ENCODE measurements at regions of chrX and their contacts with region 1.

Region 1: GRCh38 chrX:107672955-107673378 is 44.7 kb downstream of the PRPS1 start:
- DNase-seq: peak; percentile 76
- H3K4me3 Mint-ChIP-seq: no peak overlapping the region
- H3K27ac Mint-ChIP-seq: peak overlapping the region; percentile 63
- H3K4me1 Mint-ChIP-seq: peaks cover 36% of the 10 kb centered on the region
- H3K27me3 Mint-ChIP-seq: no peaks in the 10 kb centered on the region
- CTCF ChIP-seq: peak; percentile 80

Region 2: GRCh38 chrX:107398115-107398514 is 274.9 kb before region 1 on chrX:
- CTCF ChIA-PET with region 1: no interaction called
- intact Hi-C with region 1: no loop called
- DNase-seq: no peak
- H3K4me3 Mint-ChIP-seq: no peak overlapping the region
- H3K27ac Mint-ChIP-seq: no peak overlapping the region
- H3K4me1 Mint-ChIP-seq: no peaks in the 10 kb centered on the region
- H3K27me3 Mint-ChIP-seq: peaks cover 23% of the 10 kb centered on the region
- CTCF ChIP-seq: no peak

Region 3: GRCh38 chrX:107710617-107711391 is 37.8 kb after region 1 on chrX:
- CTCF ChIA-PET with region 1: interaction called, 39 read pairs
- intact Hi-C with region 1: loop called (anchors 2 kb)
- DNase-seq: peak; percentile 63
- H3K4me3 Mint-ChIP-seq: peak overlapping the region; percentile 65
- H3K27ac Mint-ChIP-seq: peak overlapping the region; percentile 100
- H3K4me1 Mint-ChIP-seq: peaks cover 38% of the 10 kb centered on the region
- H3K27me3 Mint-ChIP-seq: no peaks in the 10 kb centered on the region
- CTCF ChIP-seq: no peak

Region 4: DNA sequence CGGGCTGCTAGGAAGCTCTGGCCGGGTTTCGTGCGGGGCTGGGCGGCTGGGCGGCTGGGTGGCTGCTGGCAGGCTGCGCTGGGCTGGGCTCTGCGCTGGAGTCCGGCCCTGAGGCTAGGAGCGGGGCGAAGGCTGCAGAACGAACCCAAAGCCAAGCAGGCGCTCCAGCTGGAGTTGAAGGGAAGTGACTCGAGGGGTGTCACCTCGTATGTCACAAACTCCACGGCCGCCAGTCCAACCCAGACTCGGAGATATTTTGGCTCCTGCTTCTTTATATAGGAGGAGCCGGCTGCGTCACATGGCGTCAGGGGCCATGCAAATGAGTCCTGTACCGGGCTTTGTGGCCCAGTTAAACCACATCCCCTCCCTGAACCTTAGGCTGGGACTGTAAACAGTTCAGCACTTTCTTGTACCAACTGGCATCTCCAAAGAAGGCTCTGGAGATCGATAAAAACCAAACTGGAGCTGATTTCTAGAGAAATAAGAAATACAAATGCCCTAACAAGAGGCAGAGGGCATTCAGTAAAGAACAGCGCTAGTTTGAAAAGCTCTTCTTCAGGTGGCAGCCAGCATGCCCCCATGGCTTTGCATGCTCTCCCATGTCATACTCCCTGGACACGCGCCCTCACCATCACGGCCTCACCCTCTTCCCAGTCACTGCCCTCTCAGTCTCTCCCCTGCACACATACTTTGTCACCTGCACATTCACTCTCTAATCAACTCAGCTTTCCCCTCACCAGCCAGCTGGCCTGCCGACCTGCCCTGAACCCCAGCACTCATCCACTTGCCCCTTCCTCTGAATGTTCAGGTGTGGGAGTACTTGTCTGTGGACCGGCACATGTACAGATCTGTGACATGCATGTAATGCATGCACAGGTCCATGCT is 44.1 kb after region 1 on chrX:
- CTCF ChIA-PET with region 1: interaction called, 39 read pairs
- intact Hi-C with region 1: loop called (anchors 1 kb)
- DNase-seq: peak; percentile 77
- H3K4me3 Mint-ChIP-seq: peak overlapping the region; percentile 92
- H3K27ac Mint-ChIP-seq: peak overlapping the region; percentile 82
- H3K4me1 Mint-ChIP-seq: peaks cover 51% of the 10 kb centered on the region
- H3K27me3 Mint-ChIP-seq: no peaks in the 10 kb centered on the region
- CTCF ChIP-seq: no peak

Region 5: DNA sequence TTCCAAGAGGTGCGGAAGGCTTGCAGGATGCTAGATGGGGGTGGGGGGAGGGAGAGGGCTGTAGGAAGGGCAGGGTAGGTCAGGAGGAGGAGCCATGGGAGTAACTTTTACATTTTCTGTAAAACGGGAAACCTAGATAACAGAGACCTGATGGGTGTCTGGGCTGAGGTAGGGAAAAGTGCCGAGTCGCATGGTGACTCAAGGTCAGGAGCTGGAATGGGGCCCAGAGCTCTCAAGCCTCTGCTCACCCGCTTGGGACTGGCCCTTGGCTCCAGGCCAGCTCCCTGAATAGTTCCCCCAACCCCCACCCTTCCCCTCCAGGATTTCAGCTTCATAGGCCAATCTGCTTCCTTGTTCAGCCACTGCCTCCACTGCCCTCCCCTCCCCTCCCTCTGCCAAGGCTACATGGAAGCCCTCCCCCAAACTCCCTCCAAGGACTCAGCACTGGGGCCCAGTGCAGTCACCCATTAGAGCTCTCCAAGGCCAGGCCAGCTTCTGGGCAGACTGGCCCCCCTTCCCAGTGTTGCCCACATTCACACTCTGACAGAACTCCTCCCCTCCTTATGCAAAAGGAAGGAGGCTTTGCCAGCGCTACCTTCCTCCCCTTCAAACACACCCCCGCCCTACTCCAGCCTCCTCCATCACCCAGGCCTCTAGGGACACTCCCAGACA is 59.0 kb after region 1 on chrX:
- CTCF ChIA-PET with region 1: interaction called, 6 read pairs
- intact Hi-C with region 1: loop called (anchors 5 kb)
- DNase-seq: peak; percentile 87
- H3K4me3 Mint-ChIP-seq: no peak overlapping the region
- H3K27ac Mint-ChIP-seq: peak overlapping the region; percentile 84
- H3K4me1 Mint-ChIP-seq: peaks cover 37% of the 10 kb centered on the region
- H3K27me3 Mint-ChIP-seq: no peaks in the 10 kb centered on the region
- CTCF ChIP-seq: no peak

Measured in Calu3 (cell line).